ENCODE measurements at regions of chr10 and their contacts with region 1.

Region 1: GRCh38 chr10:88932539-88933256 is 19.9 kb downstream of the ACTA2 start:
- DNase-seq: peak in 28 of 35 experiments; percentile 5 to 70 (median 15)
- ATAC-seq: peak; percentile 69 to 80 (median 71)
- H3K4me3 ChIP-seq: no peak overlapping the region
- H3K4me3 Mint-ChIP-seq: no peak overlapping the region
- H3K27ac ChIP-seq: no peak overlapping the region
- H3K27ac Mint-ChIP-seq: peak overlapping the region in 1 of 2 donors; percentile 80
- H3K4me1 ChIP-seq: peaks cover 0 to 10% of the 10 kb centered on the region in 2 experiments
- H3K4me1 Mint-ChIP-seq: peaks cover 15 to 20% (median 17%) of the 10 kb centered on the region in 3 donors
- H3K27me3 ChIP-seq: no peaks in the 10 kb centered on the region
- H3K27me3 Mint-ChIP-seq: no peaks in the 10 kb centered on the region

Region 2: DNA sequence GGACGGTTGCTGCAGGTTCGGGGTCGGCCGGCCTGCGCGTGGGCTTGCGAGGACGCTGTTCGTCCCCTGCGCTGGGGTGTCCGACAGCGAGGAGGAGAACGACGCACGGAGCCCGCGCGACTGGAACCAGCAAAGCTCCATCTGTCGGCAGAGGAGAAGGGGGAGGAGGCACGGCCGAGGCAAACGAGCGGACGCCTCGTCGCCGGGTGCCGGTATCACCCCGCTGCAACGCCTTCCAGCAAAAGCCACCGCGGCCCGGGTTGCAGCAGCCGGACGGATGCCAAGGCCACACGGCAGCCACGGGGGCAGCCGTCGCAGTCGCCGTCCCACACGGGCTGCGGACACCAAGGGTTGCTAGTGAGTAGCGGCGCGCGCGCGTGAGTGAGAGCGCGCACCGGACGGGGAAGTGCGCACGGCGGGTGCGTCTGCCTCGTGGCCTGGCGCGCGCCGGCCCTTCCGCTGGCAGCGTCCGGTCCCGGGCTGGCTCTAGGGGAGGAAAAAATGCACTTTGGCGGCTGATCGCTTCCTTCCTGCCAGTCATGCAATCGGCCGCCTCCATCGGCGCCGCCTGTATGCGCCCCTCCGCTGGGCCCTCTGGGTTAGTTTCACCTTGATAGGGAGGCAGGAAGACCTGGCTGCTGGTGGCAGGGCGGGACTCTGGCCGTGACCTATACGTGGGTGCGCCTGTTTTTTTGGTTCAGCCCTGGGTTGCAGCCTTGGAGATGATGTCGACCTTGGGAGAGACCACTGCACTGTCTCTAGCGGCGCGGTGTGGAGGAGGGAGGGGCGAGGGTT is 52.2 kb before region 1 on chr10:
- CTCF ChIA-PET with region 1: interaction called, 4 to 13 read pairs
- POLR2A ChIA-PET with region 1: interaction called, 4 to 5 read pairs
- DNase-seq: peak; percentile 37 to 79 (median 61)
- ATAC-seq: peak; percentile 77 to 81 (median 80)
- H3K4me3 ChIP-seq: peak overlapping the region; percentile 70 to 87
- H3K4me3 Mint-ChIP-seq: peak overlapping the region; percentile 97 to 98 (median 97)
- H3K27ac ChIP-seq: peak overlapping the region; percentile 81
- H3K27ac Mint-ChIP-seq: peak overlapping the region; percentile 88 to 94
- H3K4me1 ChIP-seq: peaks cover 17 to 41% of the 10 kb centered on the region in 2 experiments
- H3K4me1 Mint-ChIP-seq: peaks cover 64 to 70% (median 68%) of the 10 kb centered on the region in 3 donors
- H3K27me3 ChIP-seq: no peaks in the 10 kb centered on the region
- H3K27me3 Mint-ChIP-seq: no peaks in the 10 kb centered on the region

Region 3: GRCh38 chr10:88944813-88945212 is 12.1 kb after region 1 on chr10:
- CTCF ChIA-PET with region 1: interaction called, 8 to 11 read pairs
- POLR2A ChIA-PET with region 1: no interaction called
- DNase-seq: no peak
- ATAC-seq: no peak
- H3K4me3 ChIP-seq: no peak overlapping the region
- H3K4me3 Mint-ChIP-seq: no peak overlapping the region
- H3K27ac ChIP-seq: no peak overlapping the region
- H3K27ac Mint-ChIP-seq: no peak overlapping the region
- H3K4me1 ChIP-seq: peaks cover 0 to 3% of the 10 kb centered on the region in 2 experiments
- H3K4me1 Mint-ChIP-seq: peaks cover 7 to 14% (median 9%) of the 10 kb centered on the region in 3 donors
- H3K27me3 ChIP-seq: no peaks in the 10 kb centered on the region
- H3K27me3 Mint-ChIP-seq: no peaks in the 10 kb centered on the region

Region 4: DNA sequence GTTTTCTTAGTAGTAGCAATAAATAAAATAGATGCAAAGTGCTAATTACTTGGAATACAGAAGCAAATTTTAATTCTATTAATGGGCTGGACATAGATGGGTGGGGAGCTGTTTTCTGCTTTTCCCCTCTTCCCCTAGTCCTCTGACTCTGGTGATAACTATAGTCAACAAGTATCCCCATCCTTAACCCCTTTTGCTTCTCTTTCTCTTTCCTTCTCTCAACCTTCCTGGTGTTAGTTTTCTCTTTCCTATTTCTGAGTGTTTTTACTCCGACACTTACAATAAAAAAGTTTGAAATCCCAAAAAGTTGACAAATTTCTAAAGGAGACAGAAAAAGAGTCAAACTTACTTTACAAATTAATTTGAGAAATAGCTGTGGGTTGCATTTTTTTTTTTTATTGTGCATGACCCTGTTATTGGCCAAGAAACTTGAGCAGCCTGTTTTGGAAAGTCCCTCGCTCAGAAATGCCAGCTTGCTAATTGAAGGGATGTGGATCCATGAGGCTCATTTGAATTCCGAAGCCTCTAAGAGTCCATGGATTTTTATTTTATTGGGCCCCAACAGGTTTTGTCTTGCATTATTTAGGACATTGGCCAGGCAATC is 60.3 kb after region 1 on chr10:
- CTCF ChIA-PET with region 1: interaction called, 13 to 18 read pairs
- POLR2A ChIA-PET with region 1: interaction called in 1 of 2 experiments, 6 read pairs
- DNase-seq: peak in 1 of 35 experiments; percentile 57
- ATAC-seq: no peak
- H3K4me3 ChIP-seq: peak overlapping the region in 1 of 2 donors; percentile 94
- H3K4me3 Mint-ChIP-seq: peak overlapping the region; percentile 67 to 95 (median 76)
- H3K27ac ChIP-seq: peak overlapping the region; percentile 89
- H3K27ac Mint-ChIP-seq: peak overlapping the region; percentile 76 to 86
- H3K4me1 ChIP-seq: peaks cover 29 to 31% of the 10 kb centered on the region in 2 experiments
- H3K4me1 Mint-ChIP-seq: peaks cover 67 to 75% (median 72%) of the 10 kb centered on the region in 3 donors
- H3K27me3 ChIP-seq: no peaks in the 10 kb centered on the region
- H3K27me3 Mint-ChIP-seq: no peaks in the 10 kb centered on the region

Region 5: DNA sequence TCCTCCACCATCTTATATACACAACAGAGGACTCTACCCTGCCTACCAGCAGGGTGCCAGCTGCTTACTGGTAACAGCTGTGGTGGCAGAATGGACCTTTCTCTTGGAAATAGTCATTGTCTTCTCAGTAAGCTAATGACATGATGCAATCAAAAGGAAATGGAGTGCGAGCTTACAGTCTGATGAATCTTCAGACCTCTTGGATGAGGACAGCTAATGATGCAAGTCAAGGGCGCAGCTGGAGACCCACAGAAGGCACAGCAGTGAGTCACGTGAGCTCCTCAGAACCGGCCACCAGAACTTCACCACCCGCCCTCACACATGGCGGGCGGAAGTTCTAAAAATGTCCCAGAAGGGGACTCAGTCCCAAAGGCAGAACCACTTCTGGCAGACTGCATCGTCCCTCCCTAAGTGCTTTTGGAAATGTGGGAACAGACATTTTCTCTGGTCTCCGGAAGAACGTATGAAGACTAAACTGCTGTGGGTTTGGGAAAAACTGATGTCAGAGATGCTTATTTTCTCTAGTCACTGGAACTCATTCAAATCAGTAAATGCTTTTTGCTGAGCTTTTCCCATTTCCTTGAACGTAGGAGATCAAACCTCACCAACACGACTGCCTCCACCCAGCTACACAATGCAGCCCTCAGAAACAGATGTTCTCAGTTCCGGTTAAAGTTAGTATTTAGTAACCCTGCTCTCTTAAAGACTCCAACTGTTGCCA is 154.3 kb after region 1 on chr10:
- CTCF ChIA-PET with region 1: no interaction called
- POLR2A ChIA-PET with region 1: no interaction called
- DNase-seq: peak in 2 of 35 experiments; percentile 0 to 2
- ATAC-seq: no peak
- H3K4me3 ChIP-seq: no peak overlapping the region
- H3K4me3 Mint-ChIP-seq: peak overlapping the region in 1 of 3 donors; percentile 6
- H3K27ac ChIP-seq: no peak overlapping the region
- H3K27ac Mint-ChIP-seq: peak overlapping the region; percentile 9 to 56
- H3K4me1 ChIP-seq: peaks cover 0 to 7% of the 10 kb centered on the region in 2 experiments
- H3K4me1 Mint-ChIP-seq: peaks cover 9 to 21% (median 16%) of the 10 kb centered on the region in 3 donors
- H3K27me3 ChIP-seq: no peaks in the 10 kb centered on the region
- H3K27me3 Mint-ChIP-seq: no peaks in the 10 kb centered on the region

Region 6: GRCh38 chr10:89217057-89217990 is 284.6 kb after region 1 on chr10:
- CTCF ChIA-PET with region 1: interaction called, 28 to 54 read pairs
- POLR2A ChIA-PET with region 1: interaction called in 1 of 2 experiments, 3 read pairs
- DNase-seq: peak; percentile 21 to 79 (median 55)
- ATAC-seq: peak; percentile 55 to 69 (median 66)
- H3K4me3 ChIP-seq: no peak overlapping the region
- H3K4me3 Mint-ChIP-seq: no peak overlapping the region
- H3K27ac ChIP-seq: peak overlapping the region; percentile 36
- H3K27ac Mint-ChIP-seq: peak overlapping the region in 1 of 2 donors; percentile 47
- H3K4me1 ChIP-seq: peaks cover 3 to 4% of the 10 kb centered on the region in 2 experiments
- H3K4me1 Mint-ChIP-seq: peaks cover 8 to 11% (median 8%) of the 10 kb centered on the region in 3 donors
- H3K27me3 ChIP-seq: no peaks in the 10 kb centered on the region
- H3K27me3 Mint-ChIP-seq: no peaks in the 10 kb centered on the region